Right ventricle myocardium superior (tissue), 1 donor: ENCODE measurements at regions of chr20 and their contacts with region 1.

Region 1: GRCh38 chr20:44885392-44886265 is at the start of gene YWHAB:
- DNase-seq: peak; percentile 100
- ATAC-seq: peak; percentile 99
- total RNA-seq, gene YWHAB: 96.3 TPM

Region 2: DNA sequence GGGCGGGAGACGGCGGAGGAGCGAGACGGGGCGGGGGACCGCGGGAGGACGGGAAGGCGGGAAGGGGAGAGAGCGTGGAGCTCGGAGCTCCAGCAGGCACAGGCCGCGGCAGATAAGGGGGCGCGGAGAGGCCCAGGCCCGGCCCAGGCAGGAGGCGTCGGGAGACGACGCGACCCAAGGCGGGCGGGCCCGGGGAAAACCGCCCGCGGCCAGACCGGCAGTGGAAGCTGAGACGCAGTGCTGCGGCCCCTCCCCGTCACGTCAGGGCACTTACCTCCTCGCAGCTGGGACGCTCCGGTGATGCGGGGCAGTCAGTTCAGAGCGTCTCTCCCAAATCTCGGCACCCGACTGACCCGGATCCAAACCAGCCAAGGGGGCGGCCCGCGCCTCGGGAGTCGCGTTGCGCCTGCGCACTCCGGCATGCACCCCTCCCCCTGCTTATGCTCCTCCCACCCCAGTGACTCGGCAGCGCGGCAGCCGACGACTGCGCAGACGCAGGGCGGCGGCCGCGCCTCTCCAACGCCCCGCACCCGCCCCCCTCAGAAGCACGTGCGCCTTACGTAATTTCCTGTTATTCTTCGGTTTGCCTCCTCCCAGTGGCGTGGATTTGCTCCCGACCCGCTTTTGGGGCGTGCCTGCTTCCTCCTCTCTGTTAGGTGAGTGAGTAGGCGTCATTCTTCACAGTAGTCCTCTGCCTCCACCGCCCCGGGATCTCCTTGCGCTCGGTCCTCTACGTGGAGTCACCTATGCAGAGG is 675.0 kb before region 1 on chr20 and contains the start of gene OSER1:
- intact Hi-C with region 1: loop called (anchors 10 kb)
- DNase-seq: peak; percentile 97
- ATAC-seq: peak; percentile 96
- total RNA-seq, gene OSER1: 32.8 TPM